ENCODE measurements at regions of chr4 and their contacts with region 1.

Region 1: DNA sequence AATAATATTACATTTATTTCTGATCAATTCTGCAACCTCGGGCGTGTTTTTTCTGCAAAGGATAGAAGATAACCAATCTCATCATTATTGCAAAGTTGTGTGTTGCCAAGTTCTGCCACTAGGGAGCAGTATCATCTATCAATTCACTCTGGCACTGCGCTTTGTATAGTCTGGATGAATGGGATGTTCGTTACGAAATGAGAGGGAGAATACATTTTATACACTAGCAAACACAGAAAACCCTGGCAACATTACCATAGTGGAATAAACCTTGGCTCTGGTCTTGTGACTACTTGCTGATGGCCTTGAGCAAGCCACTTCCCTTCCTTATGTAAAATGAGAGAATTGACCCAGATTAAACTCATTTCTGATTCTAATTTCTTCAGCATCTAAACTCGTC is 97.5 kb upstream of the ZNF518B start:
- DNase-seq: peak in 4 of 5 donors; percentile 20 to 36 (median 28)
- H3K4me3 ChIP-seq: no peak overlapping the region
- H3K4me3 Mint-ChIP-seq: peak overlapping the region in 2 of 8 donors; percentile 2 to 7
- H3K27ac ChIP-seq: no peak overlapping the region
- H3K27ac Mint-ChIP-seq: no peak overlapping the region
- H3K4me1 ChIP-seq: no peaks in the 10 kb centered on the region
- H3K4me1 Mint-ChIP-seq: peaks cover 0 to 5% (median 2%) of the 10 kb centered on the region in 4 donors
- H3K27me3 ChIP-seq: no peaks in the 10 kb centered on the region
- H3K27me3 Mint-ChIP-seq: peaks cover 10 to 11% of the 10 kb centered on the region in 2 donors

Region 2: GRCh38 chr4:10157478-10158332 is 397.0 kb before region 1 on chr4:
- CTCF ChIA-PET with region 1: interaction called, 16 read pairs
- POLR2A ChIA-PET with region 1: no interaction called
- intact Hi-C with region 1: loop called (anchors 1 kb)
- DNase-seq: peak in 4 of 5 donors; percentile 21 to 34 (median 28)
- H3K4me3 ChIP-seq: no peak overlapping the region
- H3K4me3 Mint-ChIP-seq: no peak overlapping the region
- H3K27ac ChIP-seq: no peak overlapping the region
- H3K27ac Mint-ChIP-seq: peak overlapping the region in 1 of 7 donors; percentile 19
- H3K4me1 ChIP-seq: peaks cover 34% of the 10 kb centered on the region
- H3K4me1 Mint-ChIP-seq: peaks cover 22 to 41% (median 29%) of the 10 kb centered on the region in 4 donors
- H3K27me3 ChIP-seq: no peaks in the 10 kb centered on the region
- H3K27me3 Mint-ChIP-seq: peaks cover 0 to 1% of the 10 kb centered on the region in 2 donors

Region 3: DNA sequence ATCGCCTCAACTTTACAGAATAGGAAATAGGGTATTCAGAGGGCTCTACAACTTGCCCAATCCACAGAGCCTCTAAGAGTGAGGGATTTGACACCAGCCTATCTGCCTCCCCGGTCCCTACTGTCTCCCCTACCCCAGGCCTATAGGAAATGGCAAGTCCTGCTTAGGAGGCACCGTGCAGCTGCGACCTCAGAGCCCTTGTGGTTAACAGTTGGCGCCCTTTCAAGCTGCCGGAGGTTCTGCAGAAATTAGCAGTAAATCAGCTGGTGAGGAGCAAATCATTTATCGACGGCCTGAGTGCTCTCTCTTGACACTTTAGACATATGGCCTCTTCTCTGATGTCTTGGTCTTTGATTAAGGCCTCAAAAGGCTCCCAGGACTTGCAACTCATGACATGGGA is 33.0 kb after region 1 on chr4:
- CTCF ChIA-PET with region 1: no interaction called
- POLR2A ChIA-PET with region 1: no interaction called
- intact Hi-C with region 1: no loop called
- DNase-seq: peak in 1 of 5 donors; percentile 12
- H3K4me3 ChIP-seq: no peak overlapping the region
- H3K4me3 Mint-ChIP-seq: peak overlapping the region in 1 of 8 donors; percentile 10
- H3K27ac ChIP-seq: no peak overlapping the region
- H3K27ac Mint-ChIP-seq: no peak overlapping the region
- H3K4me1 ChIP-seq: peaks cover 33% of the 10 kb centered on the region
- H3K4me1 Mint-ChIP-seq: peaks cover 13 to 30% (median 19%) of the 10 kb centered on the region in 4 donors
- H3K27me3 ChIP-seq: no peaks in the 10 kb centered on the region
- H3K27me3 Mint-ChIP-seq: peaks cover 0 to 7% of the 10 kb centered on the region in 2 donors

Measured in CD4-positive, alpha-beta memory T cell (primary cell).